Activated T-helper 2 cell treated with anti-CD3 and anti-CD28 coated beads, Interferon-gamma antibody, Interleukin-2, Interleukin-4, amounts not matched to agents 10 μg/mL and 5 μg/mL and 100 μg/mL, durations not matched to agents 14 hours and 24 hours and 36 hours (primary cell): ENCODE measurements at regions of chr16 and their contacts with region 1.

Region 1: GRCh38 chr16:2267913-2268666 is at the start of gene RNPS1:
- DNase-seq: peak; percentile 97
- H3K4me3 Mint-ChIP-seq: peak within 1 kb of the TSS; percentile 89
- H3K27ac Mint-ChIP-seq: peak within 1 kb of the TSS; percentile 98
- H3K4me1 Mint-ChIP-seq: peaks cover 29% of the 10 kb centered on the region
- H3K27me3 Mint-ChIP-seq: no peaks in the 10 kb centered on the region
- total RNA-seq, gene RNPS1: 369 TPM in 2 replicates

Region 2: GRCh38 chr16:2223375-2224182 is 44.5 kb before region 1 on chr16 and contains the start of gene E4F1:
- intact Hi-C with region 1: loop called (anchors 2 kb)
- DNase-seq: peak; percentile 100
- H3K4me3 Mint-ChIP-seq: peak within 1 kb of the TSS; percentile 82
- H3K27ac Mint-ChIP-seq: peak within 1 kb of the TSS; percentile 75
- H3K4me1 Mint-ChIP-seq: peaks cover 8% of the 10 kb centered on the region
- H3K27me3 Mint-ChIP-seq: no peaks in the 10 kb centered on the region
- total RNA-seq, gene E4F1: 29.3 and 30.0 TPM in 2 replicates

Region 3: GRCh38 chr16:2251483-2252240 is 16.4 kb before region 1 on chr16 and contains the start of gene ECI1:
- intact Hi-C with region 1: loop called (anchors 1 kb)
- DNase-seq: peak; percentile 81
- H3K4me3 Mint-ChIP-seq: peak within 1 kb of the TSS; percentile 91
- H3K27ac Mint-ChIP-seq: peak within 1 kb of the TSS; percentile 91
- H3K4me1 Mint-ChIP-seq: peaks cover 1% of the 10 kb centered on the region
- H3K27me3 Mint-ChIP-seq: no peaks in the 10 kb centered on the region
- total RNA-seq, gene ECI1: 40.4 and 45.1 TPM in 2 replicates

Region 4: DNA sequence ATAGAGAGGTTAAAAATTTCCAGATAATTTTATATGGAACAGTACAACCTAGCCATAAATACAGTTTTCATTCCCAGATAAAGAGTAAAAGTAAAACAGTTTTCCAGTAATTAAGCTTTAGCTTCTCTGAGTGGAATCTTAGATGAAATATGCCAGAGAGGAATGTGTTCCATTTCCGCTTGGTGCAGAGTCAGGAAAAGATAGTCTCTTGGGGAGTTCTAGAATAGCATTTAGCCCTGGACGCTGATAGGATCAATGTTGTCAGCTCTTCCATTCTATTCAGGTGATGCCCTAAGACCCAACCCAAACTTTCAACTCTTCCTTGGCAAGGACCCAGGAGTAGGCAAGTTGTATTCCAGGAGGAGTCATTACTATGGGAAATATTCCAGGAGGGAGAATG is 103.3 kb after region 1 on chr16:
- intact Hi-C with region 1: no loop called
- DNase-seq: no peak
- H3K4me3 Mint-ChIP-seq: no peak overlapping the region
- H3K27ac Mint-ChIP-seq: no peak overlapping the region
- H3K4me1 Mint-ChIP-seq: no peaks in the 10 kb centered on the region
- H3K27me3 Mint-ChIP-seq: peaks cover 31% of the 10 kb centered on the region

Region 5: DNA sequence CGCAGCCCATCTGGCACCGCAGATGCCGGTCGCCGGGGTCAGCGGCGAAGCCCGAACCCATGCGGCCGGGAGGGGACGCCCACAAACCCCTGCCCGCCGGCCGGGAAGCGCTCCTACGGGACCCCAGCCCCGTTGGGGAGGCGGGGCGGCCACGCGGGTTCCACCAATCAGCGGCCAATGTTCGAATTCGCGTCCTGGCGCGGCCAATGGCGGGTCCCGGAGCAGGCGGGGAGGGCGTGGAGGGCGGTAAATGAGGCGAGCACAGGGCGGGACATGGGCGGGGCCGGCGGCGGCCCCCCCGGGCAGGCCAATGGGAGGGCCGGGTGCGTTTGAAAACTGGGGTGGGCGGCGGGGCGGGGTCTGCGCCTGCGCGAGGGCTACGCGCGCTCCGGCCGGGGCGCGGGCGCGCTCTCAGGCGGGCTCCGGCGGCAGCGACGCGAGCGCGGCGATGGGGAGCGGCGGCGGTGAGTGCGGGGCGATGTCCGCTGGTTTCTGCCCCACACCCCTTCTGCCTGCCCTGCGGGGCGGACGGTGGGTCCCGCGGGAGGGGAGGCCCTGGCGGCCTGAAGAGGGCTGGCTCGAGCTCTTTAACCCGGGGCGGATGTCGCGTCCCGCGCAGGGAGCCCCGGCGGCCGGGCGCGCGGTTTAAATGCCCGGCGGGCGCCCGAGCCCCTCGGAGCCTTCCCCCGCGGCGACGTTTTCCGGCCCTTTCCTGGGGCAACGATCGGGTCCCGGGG is 161.1 kb after region 1 on chr16 and contains the start of gene CCNF:
- intact Hi-C with region 1: loop called (anchors 5 kb)
- DNase-seq: peak; percentile 94
- H3K4me3 Mint-ChIP-seq: peak within 1 kb of the TSS; percentile 96
- H3K27ac Mint-ChIP-seq: peak within 1 kb of the TSS; percentile 62
- H3K4me1 Mint-ChIP-seq: peaks cover 27% of the 10 kb centered on the region
- H3K27me3 Mint-ChIP-seq: no peaks in the 10 kb centered on the region
- total RNA-seq, gene CCNF: 48.4 and 48.9 TPM in 2 replicates